Natural killer cell (primary cell): ENCODE measurements at regions of chr3 and their contacts with region 1.

Region 1: GRCh38 chr3:46976326-46977190 is at the start of gene CCDC12:
- DNase-seq: peak; percentile 93 to 98
- ATAC-seq: peak; percentile 73 to 89 (median 78)
- H3K4me3 ChIP-seq: peak within 1 kb of the TSS; percentile 64
- H3K4me3 Mint-ChIP-seq: peak within 1 kb of the TSS; percentile 96
- H3K27ac ChIP-seq: peak within 1 kb of the TSS; percentile 76
- H3K27ac Mint-ChIP-seq: peak within 1 kb of the TSS; percentile 94
- H3K4me1 ChIP-seq: peaks cover 75% of the 10 kb centered on the region
- H3K4me1 Mint-ChIP-seq: peaks cover 57 to 68% of the 10 kb centered on the region in 2 donors
- H3K27me3 ChIP-seq: no peaks in the 10 kb centered on the region
- H3K27me3 Mint-ChIP-seq: no peaks in the 10 kb centered on the region
- CTCF ChIP-seq: no peak
- total RNA-seq, gene CCDC12: 104 to 114 (median 111) TPM

Region 2: GRCh38 chr3:46947981-46948791 is 28.4 kb before region 1 on chr3:
- intact Hi-C with region 1: loop called (anchors 1 kb)
- DNase-seq: peak; percentile 66 to 87
- ATAC-seq: peak; percentile 58 to 76 (median 66)
- H3K4me3 ChIP-seq: peak overlapping the region; percentile 17
- H3K4me3 Mint-ChIP-seq: peak overlapping the region; percentile 92
- H3K27ac ChIP-seq: peak overlapping the region; percentile 98
- H3K27ac Mint-ChIP-seq: peak overlapping the region; percentile 96 to 99
- H3K4me1 ChIP-seq: peaks cover 98% of the 10 kb centered on the region
- H3K4me1 Mint-ChIP-seq: peaks cover 90 to 92% of the 10 kb centered on the region in 2 donors
- H3K27me3 ChIP-seq: no peaks in the 10 kb centered on the region
- H3K27me3 Mint-ChIP-seq: no peaks in the 10 kb centered on the region
- CTCF ChIP-seq: no peak

Region 3: DNA sequence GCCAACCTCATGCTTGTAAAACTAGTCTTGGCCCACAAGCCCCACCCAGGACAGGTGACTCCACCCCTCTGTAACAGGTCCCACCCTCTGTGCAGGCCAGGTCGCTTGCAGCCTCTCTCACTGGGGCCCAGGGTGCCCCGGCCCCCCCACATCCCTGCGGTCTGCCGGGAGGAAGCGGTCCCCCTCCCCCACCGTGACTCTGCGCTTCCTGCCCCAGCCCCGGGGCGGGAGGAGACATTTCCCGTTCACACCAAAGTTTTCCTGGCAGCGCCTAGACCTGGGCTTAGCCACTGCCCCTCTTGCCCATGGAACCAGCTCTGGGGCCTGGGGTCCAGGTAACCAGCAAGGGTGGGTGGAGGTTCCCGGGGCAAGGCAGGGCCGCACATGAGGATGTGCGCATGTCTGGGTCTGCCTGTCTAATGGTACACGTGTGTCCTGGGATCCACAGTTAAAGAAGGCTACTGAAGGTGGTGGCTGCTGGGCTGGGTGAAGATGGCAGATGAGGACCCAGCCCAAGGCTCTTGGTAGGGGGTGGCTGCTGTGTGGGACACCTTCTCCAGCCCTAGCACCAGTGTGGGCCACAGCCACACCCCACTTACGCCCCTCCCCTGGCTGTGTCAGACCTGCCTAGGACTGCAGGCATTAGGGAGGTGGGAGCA is 11.3 kb after region 1 on chr3:
- intact Hi-C with region 1: loop called (anchors 1 kb)
- DNase-seq: peak; percentile 78 to 95
- ATAC-seq: peak; percentile 93 to 98 (median 96)
- H3K4me3 ChIP-seq: peak overlapping the region; percentile 21
- H3K4me3 Mint-ChIP-seq: peak overlapping the region; percentile 81
- H3K27ac ChIP-seq: peak overlapping the region; percentile 74
- H3K27ac Mint-ChIP-seq: peak overlapping the region; percentile 84 to 88
- H3K4me1 ChIP-seq: peaks cover 85% of the 10 kb centered on the region
- H3K4me1 Mint-ChIP-seq: peaks cover 42 to 86% of the 10 kb centered on the region in 2 donors
- H3K27me3 ChIP-seq: no peaks in the 10 kb centered on the region
- H3K27me3 Mint-ChIP-seq: no peaks in the 10 kb centered on the region
- CTCF ChIP-seq: no peak

Region 4: DNA sequence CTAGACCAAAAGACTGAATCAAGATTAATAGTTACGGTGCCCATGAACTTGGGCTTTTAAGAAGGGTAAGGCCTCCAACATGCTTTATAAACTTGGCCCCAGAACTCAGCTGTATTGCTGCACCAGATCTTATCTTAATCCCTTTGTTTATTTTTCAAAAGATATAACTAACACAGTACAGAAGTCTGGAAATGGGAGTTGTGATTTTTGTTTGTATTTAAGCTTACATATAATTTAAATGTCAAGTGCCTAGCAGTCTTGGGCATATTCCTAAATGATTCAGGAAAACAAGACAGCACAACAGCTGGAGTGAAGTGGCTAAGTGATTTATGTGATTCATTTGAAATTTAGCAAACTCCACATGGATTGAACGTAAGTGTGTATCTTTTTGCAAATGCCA is 59.1 kb after region 1 on chr3:
- intact Hi-C with region 1: loop called (anchors 5 kb)
- DNase-seq: no peak
- ATAC-seq: no peak
- H3K4me3 ChIP-seq: no peak overlapping the region
- H3K4me3 Mint-ChIP-seq: no peak overlapping the region
- H3K27ac ChIP-seq: no peak overlapping the region
- H3K27ac Mint-ChIP-seq: peak overlapping the region in 1 of 2 donors; percentile 31
- H3K4me1 ChIP-seq: peaks cover 11% of the 10 kb centered on the region
- H3K4me1 Mint-ChIP-seq: peaks cover 23 to 36% of the 10 kb centered on the region in 2 donors
- H3K27me3 ChIP-seq: no peaks in the 10 kb centered on the region
- H3K27me3 Mint-ChIP-seq: no peaks in the 10 kb centered on the region
- CTCF ChIP-seq: no peak